Left colon (tissue), 2 donors: ENCODE measurements at regions of chr9 and their contacts with region 1.

Region 1: DNA sequence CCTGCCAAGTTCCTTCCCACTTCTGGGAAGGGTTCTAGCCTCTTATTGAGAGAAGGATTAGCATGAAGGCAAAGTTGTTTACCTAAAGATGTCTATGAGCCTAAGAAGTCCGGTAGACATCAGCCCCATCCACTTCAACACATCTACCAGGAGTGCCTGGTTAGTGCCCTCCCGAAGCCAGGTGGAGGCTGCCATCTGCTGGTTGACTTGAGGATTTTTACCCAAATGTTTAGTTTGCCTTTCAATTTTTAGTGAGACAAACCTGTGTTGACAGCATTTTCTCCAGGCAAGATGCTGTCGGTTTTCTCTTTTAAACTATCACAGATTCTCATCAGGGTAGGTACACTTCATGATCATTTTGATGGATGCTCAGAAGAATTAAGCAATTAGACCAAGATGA is 83.6 kb upstream of the TNFSF8 start:
- DNase-seq: peak; percentile 49 to 55
- ATAC-seq: peak; percentile 82

Region 2: GRCh38 chr9:114681594-114682332 is 332.2 kb before region 1 on chr9 and contains the start of gene TEX48:
- intact Hi-C with region 1: loop called in 1 of 2 experiments (anchors 5 kb)
- DNase-seq: peak; percentile 73 to 78
- ATAC-seq: peak; percentile 99
- total RNA-seq, gene TEX48: not detected

Region 3: GRCh38 chr9:114738581-114739316 is 275.2 kb before region 1 on chr9:
- intact Hi-C with region 1: loop called (anchors 5 to 10 kb)
- DNase-seq: peak; percentile 49 to 69
- ATAC-seq: peak; percentile 95

Region 4: GRCh38 chr9:114889802-114890251 is 124.2 kb before region 1 on chr9:
- intact Hi-C with region 1: no loop called
- DNase-seq: no peak
- ATAC-seq: peak; percentile 23

Region 5: GRCh38 chr9:115524453-115525059 is 510.6 kb after region 1 on chr9:
- intact Hi-C with region 1: loop called in 1 of 2 experiments (anchors 5 kb)
- DNase-seq: peak in 1 of 2 donors; percentile 4
- ATAC-seq: peak; percentile 64